A673 (cell line): ENCODE measurements at regions of chr9 and their contacts with region 1.

Region 1: GRCh38 chr9:126558051-126558665 is 55.6 kb upstream of the LMX1B start:
- DNase-seq: peak; percentile 46
- H3K4me3 ChIP-seq: no peak overlapping the region
- H3K27ac ChIP-seq: no peak overlapping the region
- H3K4me1 ChIP-seq: no peaks in the 10 kb centered on the region
- H3K27me3 ChIP-seq: peaks cover 42% of the 10 kb centered on the region
- CTCF ChIP-seq: peak; percentile 89

Region 2: GRCh38 chr9:125422853-125423252 is 1135.3 kb before region 1 on chr9:
- CTCF ChIA-PET with region 1: interaction called, 13 read pairs
- POLR2A ChIA-PET with region 1: no interaction called
- intact Hi-C with region 1: no loop called
- DNase-seq: no peak
- H3K4me3 ChIP-seq: no peak overlapping the region
- H3K27ac ChIP-seq: no peak overlapping the region
- H3K4me1 ChIP-seq: no peaks in the 10 kb centered on the region
- H3K27me3 ChIP-seq: no peaks in the 10 kb centered on the region
- CTCF ChIP-seq: no peak

Region 3: DNA sequence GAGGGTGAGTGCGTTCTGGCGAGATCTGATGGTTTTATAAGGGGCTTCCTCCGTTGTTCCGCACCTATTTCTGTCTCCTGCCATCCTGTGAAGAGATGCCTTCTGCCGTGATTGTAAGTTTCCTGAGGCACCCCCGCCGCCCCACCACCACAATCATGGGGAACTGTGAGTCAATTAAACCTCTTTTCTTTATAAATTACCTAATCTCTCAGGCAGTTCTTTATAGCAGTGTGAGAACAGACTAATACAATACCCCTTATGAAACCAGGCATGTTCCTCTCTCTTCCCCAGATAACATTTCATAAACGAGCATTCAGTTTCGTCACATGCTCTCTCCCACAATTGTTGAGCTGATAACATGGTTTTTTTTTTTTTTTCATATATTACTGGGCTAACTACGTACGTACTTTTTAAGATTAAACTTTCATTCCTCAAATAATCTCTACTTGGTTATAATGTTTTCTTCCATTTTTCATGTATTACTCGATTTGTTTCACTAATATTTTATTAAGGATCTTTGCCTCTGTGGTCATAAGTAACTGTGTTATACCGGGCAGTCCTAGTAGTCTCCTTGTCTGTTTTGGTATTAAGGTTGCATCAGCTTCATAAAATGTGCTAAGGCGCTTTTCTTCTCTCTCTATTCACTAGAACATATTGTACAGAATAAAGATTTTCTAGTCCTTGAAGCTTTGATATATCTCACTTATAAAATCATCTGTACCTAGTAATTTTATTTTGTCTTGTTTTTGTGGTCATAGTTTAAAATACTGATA is 296.4 kb before region 1 on chr9:
- CTCF ChIA-PET with region 1: no interaction called
- POLR2A ChIA-PET with region 1: no interaction called
- intact Hi-C with region 1: no loop called
- DNase-seq: no peak
- H3K4me3 ChIP-seq: no peak overlapping the region
- H3K27ac ChIP-seq: no peak overlapping the region
- H3K4me1 ChIP-seq: no peaks in the 10 kb centered on the region
- H3K27me3 ChIP-seq: peaks cover 100% of the 10 kb centered on the region
- CTCF ChIP-seq: no peak

Region 4: GRCh38 chr9:126490214-126490631 is 67.9 kb before region 1 on chr9:
- CTCF ChIA-PET with region 1: no interaction called
- POLR2A ChIA-PET with region 1: no interaction called
- intact Hi-C with region 1: no loop called
- DNase-seq: no peak
- H3K4me3 ChIP-seq: no peak overlapping the region
- H3K27ac ChIP-seq: no peak overlapping the region
- H3K4me1 ChIP-seq: no peaks in the 10 kb centered on the region
- H3K27me3 ChIP-seq: no peaks in the 10 kb centered on the region
- CTCF ChIP-seq: no peak

Region 5: GRCh38 chr9:126500684-126501382 is 57.3 kb before region 1 on chr9:
- CTCF ChIA-PET with region 1: interaction called, 7 read pairs
- POLR2A ChIA-PET with region 1: no interaction called
- intact Hi-C with region 1: loop called (anchors 1 kb)
- DNase-seq: peak; percentile 82
- H3K4me3 ChIP-seq: no peak overlapping the region
- H3K27ac ChIP-seq: no peak overlapping the region
- H3K4me1 ChIP-seq: no peaks in the 10 kb centered on the region
- H3K27me3 ChIP-seq: no peaks in the 10 kb centered on the region
- CTCF ChIP-seq: peak; percentile 98

Region 6: DNA sequence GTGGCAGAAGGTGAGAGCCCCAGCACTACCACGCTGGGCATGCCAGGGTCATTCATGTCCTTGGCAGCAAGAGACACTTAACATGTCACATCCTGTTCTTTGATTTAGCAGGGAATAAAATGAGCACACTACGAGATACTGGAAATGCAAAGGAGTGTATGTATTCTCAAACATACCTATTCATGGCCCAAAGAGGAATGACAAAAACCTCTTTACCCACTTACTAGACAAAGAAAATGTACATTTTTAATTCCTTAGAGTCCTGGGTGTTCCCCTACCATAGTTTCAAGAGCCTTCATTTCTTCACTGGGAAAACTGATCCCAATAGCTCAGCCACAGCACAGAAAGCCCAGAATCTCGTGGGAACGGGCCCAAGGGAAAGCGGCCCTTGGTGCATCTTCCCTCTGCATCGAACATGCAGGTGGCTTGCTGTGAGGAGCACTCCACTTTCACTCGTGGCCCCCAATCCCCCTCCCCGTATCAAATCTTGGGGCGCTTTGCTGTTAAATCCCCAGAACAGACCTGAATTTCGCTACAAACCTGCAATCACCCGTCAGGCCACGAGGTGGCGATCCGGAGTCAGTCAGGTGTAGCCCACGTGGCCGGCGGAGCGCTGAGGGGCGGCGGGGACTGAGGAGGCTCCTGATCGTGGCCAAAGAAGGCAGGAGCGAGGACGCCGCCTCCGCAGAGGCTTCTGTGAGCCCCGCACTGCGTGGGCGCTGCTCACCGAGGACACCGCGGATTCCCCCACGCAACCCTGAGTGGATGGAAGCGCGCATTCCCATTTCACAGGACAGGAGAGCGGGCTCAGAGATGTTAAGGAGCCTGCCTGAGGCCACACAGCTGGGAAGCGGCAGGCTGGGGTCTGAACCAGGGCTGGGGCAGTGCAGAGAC is 147.0 kb after region 1 on chr9:
- CTCF ChIA-PET with region 1: interaction called, 12 read pairs
- POLR2A ChIA-PET with region 1: no interaction called
- intact Hi-C with region 1: no loop called
- DNase-seq: peak; percentile 81
- H3K4me3 ChIP-seq: peak overlapping the region; percentile 14
- H3K27ac ChIP-seq: no peak overlapping the region
- H3K4me1 ChIP-seq: peaks cover 17% of the 10 kb centered on the region
- H3K27me3 ChIP-seq: peaks cover 5% of the 10 kb centered on the region
- CTCF ChIP-seq: peak; percentile 93

Region 7: DNA sequence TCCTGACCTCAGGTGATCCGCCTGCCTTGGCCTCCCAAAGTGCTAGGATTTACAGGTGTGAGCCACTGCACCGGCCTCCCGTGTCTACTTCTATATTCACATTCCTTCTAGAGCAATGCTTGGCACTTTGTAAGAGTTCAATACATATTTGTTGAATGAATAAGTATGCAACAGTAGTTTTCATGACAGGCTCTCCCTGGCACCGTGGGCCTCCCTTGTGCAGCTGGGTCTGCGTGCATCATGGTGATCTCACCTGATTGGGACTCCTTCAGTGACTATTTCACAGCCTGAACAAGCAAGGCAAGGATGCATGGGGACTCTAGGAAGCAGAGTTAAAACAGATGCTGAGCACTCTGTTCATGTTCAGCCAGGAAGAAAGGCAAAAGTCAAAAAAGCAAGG is 295.5 kb after region 1 on chr9:
- CTCF ChIA-PET with region 1: no interaction called
- POLR2A ChIA-PET with region 1: no interaction called
- intact Hi-C with region 1: no loop called
- DNase-seq: no peak
- H3K4me3 ChIP-seq: no peak overlapping the region
- H3K27ac ChIP-seq: no peak overlapping the region
- H3K4me1 ChIP-seq: no peaks in the 10 kb centered on the region
- H3K27me3 ChIP-seq: no peaks in the 10 kb centered on the region
- CTCF ChIP-seq: no peak